ENCODE measurements at regions of chr1 and their contacts with region 1.

Region 1: GRCh38 chr1:80047791-80048190 is 1041.3 kb upstream of the ADGRL4 start:
- DNase-seq: no peak
- H3K4me3 ChIP-seq: no peak overlapping the region
- H3K27ac ChIP-seq: no peak overlapping the region
- H3K4me1 ChIP-seq: no peaks in the 10 kb centered on the region
- H3K27me3 ChIP-seq: no peaks in the 10 kb centered on the region
- CTCF ChIP-seq: no peak

Region 2: GRCh38 chr1:79945391-79945790 is 102.4 kb before region 1 on chr1:
- intact Hi-C with region 1: no loop called
- DNase-seq: no peak
- H3K4me3 ChIP-seq: no peak overlapping the region
- H3K27ac ChIP-seq: no peak overlapping the region
- H3K4me1 ChIP-seq: no peaks in the 10 kb centered on the region
- H3K27me3 ChIP-seq: no peaks in the 10 kb centered on the region
- CTCF ChIP-seq: no peak

Region 3: DNA sequence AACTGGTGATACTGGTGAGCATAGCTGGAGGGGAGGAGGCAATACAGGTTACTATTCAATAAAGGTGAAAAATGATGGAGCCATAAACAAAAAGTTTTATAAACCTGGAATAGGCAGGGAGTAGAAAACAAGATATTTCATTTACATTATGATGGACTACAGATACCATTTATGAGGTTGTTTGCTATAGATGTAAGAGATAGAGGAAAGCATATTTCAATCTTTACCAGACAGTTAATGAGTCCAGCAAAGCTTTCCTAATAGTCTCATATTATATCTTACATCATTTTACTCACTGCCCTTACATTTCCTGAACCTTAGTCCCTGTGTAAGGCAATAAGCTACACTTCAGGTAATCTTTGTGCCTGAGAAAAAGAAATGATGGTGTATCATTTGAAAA is 83.0 kb after region 1 on chr1:
- intact Hi-C with region 1: loop called (anchors 2 kb)
- DNase-seq: no peak
- H3K4me3 ChIP-seq: no peak overlapping the region
- H3K27ac ChIP-seq: no peak overlapping the region
- H3K4me1 ChIP-seq: no peaks in the 10 kb centered on the region
- H3K27me3 ChIP-seq: no peaks in the 10 kb centered on the region
- CTCF ChIP-seq: no peak

Measured in tibial artery (tissue), 4 donors.